ENCODE measurements at regions of chr3 and their contacts with region 1.

Region 1: DNA sequence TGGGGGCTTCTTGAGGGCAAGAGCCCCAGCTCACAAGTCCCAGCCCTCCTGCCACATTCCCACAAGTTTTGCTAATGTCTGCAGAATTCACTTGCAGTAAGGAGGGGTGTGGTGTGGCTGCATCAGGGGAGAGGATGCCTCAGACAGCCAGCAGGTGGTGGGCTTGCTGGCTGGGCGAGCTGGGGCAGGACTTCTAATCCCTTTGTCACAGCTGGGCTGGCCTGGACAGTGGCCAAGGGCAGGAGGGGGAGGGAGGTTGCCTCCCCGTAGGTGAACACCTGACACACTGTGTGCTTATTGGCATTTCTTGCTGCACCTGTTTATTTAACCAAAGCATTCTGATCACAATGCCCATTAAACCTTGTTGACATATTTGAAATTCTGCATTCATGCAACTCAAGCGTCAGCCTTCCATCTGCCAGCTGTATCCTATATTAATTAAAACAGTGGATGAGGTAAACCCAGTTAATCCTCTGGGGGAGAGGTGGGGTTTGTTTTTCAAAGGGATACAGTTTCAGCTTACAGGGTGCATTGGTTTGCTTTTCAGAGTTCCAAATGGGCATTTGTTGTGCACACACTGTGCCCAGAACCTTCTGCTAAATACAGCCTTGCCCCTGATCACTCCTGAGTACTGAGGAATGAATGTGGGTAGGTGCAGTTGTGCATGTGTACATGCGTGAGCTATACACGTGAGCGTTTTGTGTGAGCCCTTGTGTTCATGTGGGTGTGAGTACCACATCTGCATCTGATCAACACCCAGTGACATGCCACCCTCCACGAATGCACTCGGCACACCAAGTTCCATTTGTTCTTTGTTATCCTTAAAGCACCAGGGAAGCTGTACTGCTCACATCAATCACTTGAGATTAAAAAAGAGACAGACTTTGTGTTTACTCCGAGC is 268.7 kb downstream of the XXYLT1 start:
- DNase-seq: peak; percentile 68
- ATAC-seq: peak; percentile 90
- H3K4me3 Mint-ChIP-seq: no peak overlapping the region
- H3K27ac Mint-ChIP-seq: no peak overlapping the region
- H3K4me1 Mint-ChIP-seq: peaks cover 24% of the 10 kb centered on the region
- H3K27me3 Mint-ChIP-seq: no peaks in the 10 kb centered on the region
- CTCF ChIP-seq: no peak

Region 2: DNA sequence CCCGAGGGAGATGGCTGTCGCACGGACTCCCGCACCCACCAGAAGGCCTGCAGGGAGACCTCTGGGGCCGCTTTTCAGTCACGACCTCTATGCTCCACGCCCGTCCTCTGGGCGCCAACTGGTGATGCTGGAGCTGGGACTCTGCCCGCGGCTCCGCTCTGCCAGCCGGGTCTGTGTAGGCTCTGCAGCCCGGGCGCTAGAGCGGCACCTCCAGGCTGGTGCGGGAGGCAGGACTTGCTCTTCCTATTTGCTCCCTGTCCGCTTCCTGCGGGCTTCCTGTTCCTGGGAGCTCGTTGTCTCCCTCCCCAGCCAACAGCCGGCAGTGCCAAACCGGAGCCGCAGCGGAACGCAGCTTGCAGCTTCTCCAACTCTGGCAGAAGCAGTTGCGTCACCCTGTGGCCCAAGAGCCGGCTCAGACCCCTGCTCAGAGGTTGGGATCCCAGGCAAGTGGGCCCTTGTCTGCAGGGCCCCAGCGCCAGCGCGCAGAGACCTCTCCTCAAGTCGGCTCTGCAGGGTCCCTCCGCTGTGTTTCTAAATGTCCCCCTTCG is 17.1 kb before region 1 on chr3:
- CTCF ChIA-PET with region 1: interaction called, 13 read pairs
- POLR2A ChIA-PET with region 1: no interaction called
- DNase-seq: peak; percentile 83
- ATAC-seq: peak; percentile 98
- H3K4me3 Mint-ChIP-seq: peak overlapping the region; percentile 46
- H3K27ac Mint-ChIP-seq: no peak overlapping the region
- H3K4me1 Mint-ChIP-seq: peaks cover 4% of the 10 kb centered on the region; the same call in 1 of the 2 replicates
- H3K27me3 Mint-ChIP-seq: peaks cover 14% of the 10 kb centered on the region
- CTCF ChIP-seq: no peak

Region 3: GRCh38 chr3:195056506-195056905 is 54.3 kb after region 1 on chr3:
- CTCF ChIA-PET with region 1: no interaction called
- POLR2A ChIA-PET with region 1: no interaction called
- DNase-seq: no peak
- ATAC-seq: no peak
- H3K4me3 Mint-ChIP-seq: no peak overlapping the region
- H3K27ac Mint-ChIP-seq: no peak overlapping the region
- H3K4me1 Mint-ChIP-seq: peaks cover 12% of the 10 kb centered on the region
- H3K27me3 Mint-ChIP-seq: no peaks in the 10 kb centered on the region
- CTCF ChIP-seq: no peak